ENCODE measurements at regions of chrX and their contacts with region 1.

Region 1: GRCh38 chrX:35276115-35276514 is 333.5 kb downstream of the FAM47B start:
- DNase-seq: no peak
- H3K4me3 ChIP-seq: no peak overlapping the region
- CTCF ChIP-seq: no peak
- POLR2A ChIP-seq: no peak

Region 2: GRCh38 chrX:34483980-34484379 is 792.1 kb before region 1 on chrX:
- intact Hi-C with region 1: loop called (anchors 5 kb)
- DNase-seq: no peak
- H3K4me3 ChIP-seq: no peak overlapping the region
- CTCF ChIP-seq: no peak
- POLR2A ChIP-seq: no peak